ENCODE measurements at regions of chr2 and their contacts with region 1.

Region 1: GRCh38 chr2:97740590-97741182 is 27.3 kb downstream of the ZAP70 start:
- DNase-seq: peak; percentile 85
- H3K4me3 ChIP-seq: peak overlapping the region in 1 of 2 experiments; percentile 40; a peak in 1 of 4 replicates
- H3K27ac ChIP-seq: no peak overlapping the region
- H3K4me1 ChIP-seq: no peaks in the 10 kb centered on the region; a peak in 1 of 4 replicates
- H3K27me3 ChIP-seq: no peaks in the 10 kb centered on the region
- CTCF ChIP-seq: peak; percentile 68
- EP300 ChIP-seq: no peak
- RAD21 ChIP-seq: peak; percentile 63

Region 2: DNA sequence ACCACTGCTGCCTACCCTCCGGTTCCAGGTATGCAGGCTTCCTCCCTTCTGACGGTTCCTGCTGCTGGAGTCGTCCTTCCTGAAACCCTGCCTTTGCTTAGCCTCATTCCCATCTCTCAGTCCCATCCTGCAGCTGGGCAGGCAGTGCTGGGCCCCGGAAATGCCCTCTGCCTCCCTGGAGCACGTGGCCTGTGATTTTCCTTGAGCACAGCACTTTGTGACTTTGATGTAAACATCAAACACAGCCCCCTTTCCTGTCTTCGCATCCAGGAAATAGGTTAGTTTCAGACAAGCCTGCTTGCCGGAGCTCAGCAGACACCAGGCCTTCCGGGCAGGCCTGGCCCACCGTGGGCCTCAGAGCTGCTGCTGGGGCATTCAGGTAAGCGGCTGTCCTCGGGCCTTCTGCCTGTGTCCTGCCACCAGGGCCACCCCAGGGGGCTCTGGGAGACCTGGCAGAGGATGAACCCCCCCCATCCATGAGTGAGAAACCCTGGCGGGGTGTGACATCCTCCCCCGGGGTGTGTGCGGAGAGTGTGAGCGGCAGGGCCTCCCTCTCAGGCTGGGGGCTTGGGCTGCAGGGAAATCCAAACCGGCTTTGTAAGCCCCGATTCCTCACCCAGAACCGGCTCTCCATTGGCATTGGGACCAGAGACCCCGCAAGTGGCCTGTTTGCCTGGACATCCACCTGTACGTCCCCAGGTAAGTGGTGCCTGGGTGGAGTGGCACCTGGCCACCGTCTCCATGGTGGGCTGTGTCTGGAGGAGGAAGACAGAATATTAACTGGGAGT is 27.2 kb before region 1 on chr2 and contains the start of gene ZAP70:
- CTCF ChIA-PET with region 1: interaction called, 18 read pairs
- POLR2A ChIA-PET with region 1: no interaction called
- DNase-seq: no peak
- H3K4me3 ChIP-seq: no peak within 1 kb of the TSS
- H3K27ac ChIP-seq: no peak within 1 kb of the TSS
- H3K4me1 ChIP-seq: peaks cover 0 to 5% of the 10 kb centered on the region in 2 experiments; a peak in 1 of 4 replicates
- H3K27me3 ChIP-seq: no peaks in the 10 kb centered on the region
- CTCF ChIP-seq: no peak
- EP300 ChIP-seq: no peak
- RAD21 ChIP-seq: no peak
- polyA plus RNA-seq, gene ZAP70: 0.05 and 0.08 TPM in 2 replicates

Region 3: GRCh38 chr2:97751752-97752151 is 11.1 kb after region 1 on chr2:
- CTCF ChIA-PET with region 1: interaction called, 37 read pairs
- POLR2A ChIA-PET with region 1: no interaction called
- DNase-seq: no peak
- H3K4me3 ChIP-seq: no peak overlapping the region
- H3K27ac ChIP-seq: no peak overlapping the region
- H3K4me1 ChIP-seq: peaks cover 0 to 4% of the 10 kb centered on the region in 2 experiments; a peak in 1 of 4 replicates
- H3K27me3 ChIP-seq: no peaks in the 10 kb centered on the region
- CTCF ChIP-seq: no peak
- EP300 ChIP-seq: no peak
- RAD21 ChIP-seq: no peak

Region 4: DNA sequence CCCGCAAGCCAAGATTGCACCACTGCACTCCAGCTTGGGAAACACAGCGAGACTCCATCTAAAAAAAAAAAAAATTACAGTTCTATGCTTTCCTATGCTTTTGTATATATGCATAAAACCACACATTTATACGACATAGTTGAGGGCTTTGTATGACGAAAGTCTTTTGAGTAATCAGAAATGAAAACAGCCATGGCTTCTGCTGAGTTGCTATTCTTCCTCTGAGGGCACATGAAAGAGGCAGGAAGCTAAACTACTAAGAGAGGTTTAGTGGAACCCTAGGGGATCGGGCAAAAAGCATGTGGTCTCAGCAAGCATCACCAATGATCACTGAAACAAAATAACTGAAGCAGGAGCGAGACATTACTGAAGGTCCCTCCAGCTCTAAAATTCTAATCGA is 72.2 kb after region 1 on chr2:
- CTCF ChIA-PET with region 1: no interaction called
- POLR2A ChIA-PET with region 1: no interaction called
- DNase-seq: no peak
- H3K4me3 ChIP-seq: no peak overlapping the region
- H3K27ac ChIP-seq: no peak overlapping the region
- H3K4me1 ChIP-seq: peaks cover 0 to 3% of the 10 kb centered on the region in 2 experiments; a peak in 1 of 4 replicates
- H3K27me3 ChIP-seq: no peaks in the 10 kb centered on the region
- CTCF ChIP-seq: no peak
- EP300 ChIP-seq: no peak
- RAD21 ChIP-seq: no peak

Region 5: DNA sequence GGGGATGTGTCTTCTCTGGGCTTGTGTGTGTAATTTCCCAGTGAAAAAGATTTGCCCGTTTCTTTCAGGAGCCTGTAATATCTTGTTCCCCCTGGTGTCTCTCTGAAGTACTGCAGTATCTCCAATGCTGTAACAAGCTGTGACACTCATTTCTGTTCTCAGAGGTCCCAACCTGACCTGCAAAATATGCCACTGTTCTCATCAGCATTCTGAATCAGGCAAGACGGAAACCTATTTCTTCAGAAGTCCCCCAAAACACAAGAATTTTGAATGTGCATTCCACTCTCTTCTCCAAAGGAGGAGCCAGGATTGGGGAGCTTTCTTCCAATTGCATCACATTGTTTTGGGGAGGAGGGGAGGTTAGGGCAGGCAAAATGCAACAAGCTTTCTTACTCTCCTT is 528.6 kb after region 1 on chr2:
- CTCF ChIA-PET with region 1: interaction called, 13 read pairs
- POLR2A ChIA-PET with region 1: no interaction called
- DNase-seq: peak; percentile 61
- H3K4me3 ChIP-seq: no peak overlapping the region; a peak in 1 of 4 replicates
- H3K27ac ChIP-seq: no peak overlapping the region
- H3K4me1 ChIP-seq: no peaks in the 10 kb centered on the region
- H3K27me3 ChIP-seq: no peaks in the 10 kb centered on the region; the same call in 1 of the 2 replicates
- CTCF ChIP-seq: peak; percentile 67
- EP300 ChIP-seq: no peak
- RAD21 ChIP-seq: peak; percentile 79